K562 (cell line): ENCODE measurements at regions of chr11 and their contacts with region 1.

Region 1: GRCh38 chr11:72793425-72794367 is at the start of gene STARD10:
- DNase-seq: peak; percentile 98 to 99 (median 99)
- ATAC-seq: peak; percentile 96
- H3K4me3 ChIP-seq: peak within 1 kb of the TSS; percentile 72
- H3K27ac ChIP-seq: peak within 1 kb of the TSS; percentile 86
- H3K4me1 ChIP-seq: peaks cover 23 to 40% of the 10 kb centered on the region in 2 experiments; a peak in 4 of 5 replicates
- H3K27me3 ChIP-seq: no peaks in the 10 kb centered on the region
- CTCF ChIP-seq: peak; percentile 91 to 99 (median 93)
- EP300 ChIP-seq: peak; percentile 38
- POLR2A ChIP-seq: peak; percentile 68
- RAD21 ChIP-seq: peak; percentile 80 to 85
- polyA plus RNA-seq, gene STARD10: 0.15 to 0.51 TPM

Region 2: GRCh38 chr11:72752088-72752914 is 41.4 kb before region 1 on chr11 and contains the start of gene ARAP1:
- CTCF ChIA-PET with region 1: no interaction called
- POLR2A ChIA-PET with region 1: no interaction called
- in situ Hi-C with region 1: no loop called
- intact Hi-C with region 1: loop called (anchors 2 kb)
- DNase-seq: peak; percentile 85 to 98 (median 97)
- ATAC-seq: peak; percentile 91
- H3K4me3 ChIP-seq: peak within 1 kb of the TSS; percentile 97
- H3K27ac ChIP-seq: peak within 1 kb of the TSS; percentile 83
- H3K4me1 ChIP-seq: peaks cover 26 to 65% of the 10 kb centered on the region in 2 experiments
- H3K27me3 ChIP-seq: no peaks in the 10 kb centered on the region
- CTCF ChIP-seq: 0 out of 6 replicates have a peak, but pooled peaks of 2 of the 3 experiments have one; percentile 10 to 17
- EP300 ChIP-seq: no peak
- POLR2A ChIP-seq: peak; percentile 70
- RAD21 ChIP-seq: 0 out of 4 replicates have a peak, but pooled peaks of 1 of the 2 experiments have one; percentile 2
- polyA plus RNA-seq, gene ARAP1: 0.23 to 0.38 TPM

Region 3: GRCh38 chr11:72814286-72815109 is 20.8 kb after region 1 on chr11 and contains the start of gene ATG16L2:
- CTCF ChIA-PET with region 1: interaction called, 3 read pairs
- POLR2A ChIA-PET with region 1: interaction called, 17 read pairs
- in situ Hi-C with region 1: no loop called
- intact Hi-C with region 1: loop called (anchors 2 kb)
- DNase-seq: peak; percentile 84 to 93 (median 92)
- ATAC-seq: peak; percentile 88
- H3K4me3 ChIP-seq: peak within 1 kb of the TSS; percentile 59
- H3K27ac ChIP-seq: peak within 1 kb of the TSS; percentile 87; the same call in 2 of the 3 replicates
- H3K4me1 ChIP-seq: peaks cover 33 to 42% of the 10 kb centered on the region in 2 experiments
- H3K27me3 ChIP-seq: no peaks in the 10 kb centered on the region
- CTCF ChIP-seq: peak in 2 of 3 experiments; percentile 36 to 66; a peak in 3 of 6 replicates
- EP300 ChIP-seq: no peak; the same call in 1 of the 2 replicates
- POLR2A ChIP-seq: no peak; the same call in 1 of the 2 replicates
- RAD21 ChIP-seq: peak; percentile 24 to 32; a peak in 3 of 4 replicates
- polyA plus RNA-seq, gene ATG16L2: 0.18 to 0.59 TPM